ENCODE measurements at regions of chr7 and their contacts with region 1.

Region 1: DNA sequence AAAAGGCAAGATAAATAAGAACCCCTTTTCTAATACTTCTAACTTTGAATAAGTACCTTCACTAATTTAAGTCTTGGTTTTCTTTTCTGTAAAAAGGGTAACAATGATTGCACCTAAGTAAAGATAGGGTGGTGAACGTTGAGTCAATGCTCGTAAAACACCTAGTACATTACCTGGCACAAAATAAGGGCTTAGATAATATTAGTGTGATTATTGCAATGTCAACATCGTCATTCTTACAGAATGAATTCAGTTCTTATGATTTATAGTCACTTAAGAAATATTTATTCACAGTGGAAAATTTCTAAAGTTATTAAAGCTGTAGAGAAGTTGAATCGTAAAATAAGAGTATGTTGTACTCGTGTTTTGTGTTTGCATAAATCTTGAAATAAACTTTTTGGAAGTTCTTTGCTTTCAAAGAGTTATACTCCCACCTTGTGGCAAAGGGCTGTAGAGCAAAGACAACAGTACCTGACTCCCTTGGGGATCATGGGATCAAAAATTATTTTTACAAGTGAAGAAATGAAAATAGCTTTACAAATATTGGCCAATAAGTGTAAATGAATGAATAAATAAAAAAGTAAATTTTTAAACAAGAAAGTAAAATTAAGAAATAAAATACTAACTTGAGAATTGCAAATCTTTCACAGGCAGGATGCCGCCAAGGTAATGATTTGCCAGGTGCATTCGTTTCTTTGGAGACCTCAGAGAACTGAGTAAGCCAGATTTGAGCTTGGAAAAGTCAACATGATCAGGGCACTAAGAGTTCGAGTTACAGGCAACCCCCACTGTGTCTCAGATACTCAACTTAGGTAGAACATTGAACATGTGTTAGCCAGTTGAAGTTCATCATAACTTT is 285.8 kb upstream of the CACNA2D1 start:
- DNase-seq: no peak
- H3K4me3 ChIP-seq: no peak overlapping the region
- H3K27ac ChIP-seq: no peak overlapping the region
- H3K4me1 ChIP-seq: no peaks in the 10 kb centered on the region
- H3K27me3 ChIP-seq: no peaks in the 10 kb centered on the region
- CTCF ChIP-seq: peak in 2 of 3 experiments; percentile 56 to 61; a peak in 3 of 4 replicates
- EP300 ChIP-seq: no peak
- POLR2A ChIP-seq: no peak
- RAD21 ChIP-seq: peak; percentile 86 to 87

Region 2: DNA sequence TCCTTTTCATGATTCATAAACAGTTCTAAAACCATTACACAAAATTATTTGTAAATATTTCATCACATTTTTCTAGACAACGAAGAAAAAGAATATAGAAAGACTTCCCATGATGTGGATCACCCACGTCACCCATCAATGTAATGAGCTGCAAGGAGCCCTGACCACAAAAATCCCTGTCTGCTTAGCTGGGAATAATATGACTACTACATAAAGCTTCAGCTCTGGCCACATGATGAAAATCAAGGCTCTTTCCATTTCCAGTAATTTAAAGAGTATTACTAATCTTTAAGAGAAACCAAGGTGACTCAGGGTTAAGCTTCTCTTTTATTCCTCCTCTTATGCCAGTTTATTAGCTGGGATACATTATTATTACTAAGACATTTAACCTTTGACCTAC is 105.1 kb before region 1 on chr7:
- CTCF ChIA-PET with region 1: interaction called, 10 read pairs
- POLR2A ChIA-PET with region 1: no interaction called
- DNase-seq: no peak
- H3K4me3 ChIP-seq: no peak overlapping the region
- H3K27ac ChIP-seq: no peak overlapping the region
- H3K4me1 ChIP-seq: no peaks in the 10 kb centered on the region
- H3K27me3 ChIP-seq: no peaks in the 10 kb centered on the region
- CTCF ChIP-seq: no peak
- EP300 ChIP-seq: no peak
- POLR2A ChIP-seq: no peak
- RAD21 ChIP-seq: no peak

Region 3: DNA sequence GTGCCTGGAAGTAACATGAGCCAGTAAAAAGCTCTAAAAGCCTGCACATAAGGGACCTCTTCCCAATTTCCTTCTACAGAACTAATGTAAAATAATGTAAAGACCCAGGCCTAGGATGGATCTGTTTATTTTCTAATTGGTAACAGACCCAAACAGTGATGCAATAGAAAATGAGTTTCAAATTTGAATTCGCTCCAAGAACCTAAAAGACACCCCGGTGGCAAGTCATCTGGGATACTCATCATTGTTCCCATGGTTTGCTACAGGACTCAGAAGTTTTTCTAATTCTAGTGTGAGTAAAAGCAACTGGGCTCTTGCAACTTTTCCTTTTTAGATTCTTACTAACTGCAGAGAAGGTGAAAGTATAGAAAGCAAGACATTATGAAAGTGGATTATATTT is 14.5 kb before region 1 on chr7:
- CTCF ChIA-PET with region 1: interaction called, 10 read pairs
- POLR2A ChIA-PET with region 1: no interaction called
- DNase-seq: no peak
- H3K4me3 ChIP-seq: no peak overlapping the region
- H3K27ac ChIP-seq: no peak overlapping the region
- H3K4me1 ChIP-seq: no peaks in the 10 kb centered on the region
- H3K27me3 ChIP-seq: peaks cover 0 to 1% (median 0%) of the 10 kb centered on the region in 4 experiments; a peak in 1 of 7 replicates
- CTCF ChIP-seq: no peak
- EP300 ChIP-seq: no peak
- POLR2A ChIP-seq: no peak
- RAD21 ChIP-seq: no peak

Region 4: DNA sequence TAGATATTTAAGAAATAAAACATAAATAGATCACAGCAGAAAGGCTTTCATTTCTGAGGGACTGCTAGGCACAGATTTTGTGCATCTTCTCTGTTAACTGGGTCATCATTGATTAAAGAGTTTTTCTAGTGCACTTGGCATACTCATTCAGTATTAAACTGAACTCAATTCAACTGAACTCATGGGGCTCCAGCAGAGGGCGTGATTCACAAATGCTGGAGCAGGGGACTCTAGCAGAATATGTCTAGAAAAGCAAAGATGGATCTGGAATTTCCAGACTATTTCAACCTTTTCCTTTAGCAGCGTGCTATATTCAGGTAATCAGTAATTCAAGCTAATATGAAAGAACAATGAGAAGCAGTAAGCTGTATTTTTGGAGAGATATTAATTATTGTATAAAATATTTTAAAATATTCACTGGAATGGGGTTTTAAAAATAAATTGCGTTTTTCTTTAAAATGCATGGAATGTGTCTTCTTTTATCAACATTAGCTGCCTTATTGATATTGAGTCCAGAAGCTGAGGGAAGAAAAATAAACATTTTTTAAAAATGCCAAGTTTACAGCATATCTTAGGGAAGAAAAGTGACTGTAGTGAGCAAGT is 10.9 kb after region 1 on chr7:
- CTCF ChIA-PET with region 1: interaction called, 11 read pairs
- POLR2A ChIA-PET with region 1: no interaction called
- DNase-seq: peak in 1 of 2 experiments; percentile 64
- H3K4me3 ChIP-seq: no peak overlapping the region
- H3K27ac ChIP-seq: no peak overlapping the region
- H3K4me1 ChIP-seq: no peaks in the 10 kb centered on the region; a peak in 1 of 7 replicates
- H3K27me3 ChIP-seq: no peaks in the 10 kb centered on the region
- CTCF ChIP-seq: peak in 2 of 3 experiments; percentile 71 to 82; a peak in 3 of 4 replicates
- EP300 ChIP-seq: no peak
- POLR2A ChIP-seq: no peak
- RAD21 ChIP-seq: peak; percentile 75 to 81

Region 5: DNA sequence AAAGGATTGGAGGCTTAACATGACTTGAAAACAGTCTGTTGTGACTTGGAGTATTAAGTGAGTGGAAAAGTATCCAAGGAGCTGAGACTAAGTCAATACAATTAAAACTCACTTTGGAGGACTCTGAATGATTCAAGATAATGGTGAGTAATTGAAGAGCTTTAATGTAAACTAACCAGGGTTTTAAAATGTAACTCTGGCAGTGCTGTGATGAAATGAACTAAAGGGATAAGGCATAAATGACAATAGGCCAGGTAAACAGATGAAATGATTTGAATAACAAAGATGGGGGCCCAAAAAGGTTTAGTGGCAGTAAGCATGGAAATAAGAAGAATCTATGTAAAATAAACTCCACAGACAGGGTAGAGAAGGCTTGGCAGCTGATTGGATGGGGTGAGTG is 30.7 kb after region 1 on chr7:
- CTCF ChIA-PET with region 1: no interaction called
- POLR2A ChIA-PET with region 1: no interaction called
- DNase-seq: no peak
- H3K4me3 ChIP-seq: peak overlapping the region in 1 of 4 experiments; percentile 24; a peak in 1 of 8 replicates
- H3K27ac ChIP-seq: no peak overlapping the region
- H3K4me1 ChIP-seq: peaks cover 0 to 12% (median 3%) of the 10 kb centered on the region in 4 experiments; a peak in 4 of 7 replicates
- H3K27me3 ChIP-seq: peaks cover 0 to 1% (median 0%) of the 10 kb centered on the region in 4 experiments; a peak in 1 of 7 replicates
- CTCF ChIP-seq: no peak
- EP300 ChIP-seq: no peak
- POLR2A ChIP-seq: no peak
- RAD21 ChIP-seq: no peak

Region 6: GRCh38 chr7:83032195-83032594 is 302.8 kb after region 1 on chr7:
- CTCF ChIA-PET with region 1: no interaction called
- POLR2A ChIA-PET with region 1: no interaction called
- DNase-seq: no peak
- H3K4me3 ChIP-seq: no peak overlapping the region
- H3K27ac ChIP-seq: no peak overlapping the region
- H3K4me1 ChIP-seq: 0 out of 7 replicates have a peak, but pooled peaks cover 0 to 2% (median 0%) of the 10 kb centered on the region in 4 experiments
- H3K27me3 ChIP-seq: no peaks in the 10 kb centered on the region
- CTCF ChIP-seq: no peak
- EP300 ChIP-seq: no peak
- POLR2A ChIP-seq: no peak
- RAD21 ChIP-seq: no peak

Measured in H1 (cell line).